GM13977 (cell line): ENCODE measurements at regions of chr19 and their contacts with region 1.

Region 1: GRCh38 chr19:1189419-1189818 is 15.4 kb upstream of the SBNO2 start:
- DNase-seq: no peak
- CTCF ChIP-seq: no peak

Region 2: DNA sequence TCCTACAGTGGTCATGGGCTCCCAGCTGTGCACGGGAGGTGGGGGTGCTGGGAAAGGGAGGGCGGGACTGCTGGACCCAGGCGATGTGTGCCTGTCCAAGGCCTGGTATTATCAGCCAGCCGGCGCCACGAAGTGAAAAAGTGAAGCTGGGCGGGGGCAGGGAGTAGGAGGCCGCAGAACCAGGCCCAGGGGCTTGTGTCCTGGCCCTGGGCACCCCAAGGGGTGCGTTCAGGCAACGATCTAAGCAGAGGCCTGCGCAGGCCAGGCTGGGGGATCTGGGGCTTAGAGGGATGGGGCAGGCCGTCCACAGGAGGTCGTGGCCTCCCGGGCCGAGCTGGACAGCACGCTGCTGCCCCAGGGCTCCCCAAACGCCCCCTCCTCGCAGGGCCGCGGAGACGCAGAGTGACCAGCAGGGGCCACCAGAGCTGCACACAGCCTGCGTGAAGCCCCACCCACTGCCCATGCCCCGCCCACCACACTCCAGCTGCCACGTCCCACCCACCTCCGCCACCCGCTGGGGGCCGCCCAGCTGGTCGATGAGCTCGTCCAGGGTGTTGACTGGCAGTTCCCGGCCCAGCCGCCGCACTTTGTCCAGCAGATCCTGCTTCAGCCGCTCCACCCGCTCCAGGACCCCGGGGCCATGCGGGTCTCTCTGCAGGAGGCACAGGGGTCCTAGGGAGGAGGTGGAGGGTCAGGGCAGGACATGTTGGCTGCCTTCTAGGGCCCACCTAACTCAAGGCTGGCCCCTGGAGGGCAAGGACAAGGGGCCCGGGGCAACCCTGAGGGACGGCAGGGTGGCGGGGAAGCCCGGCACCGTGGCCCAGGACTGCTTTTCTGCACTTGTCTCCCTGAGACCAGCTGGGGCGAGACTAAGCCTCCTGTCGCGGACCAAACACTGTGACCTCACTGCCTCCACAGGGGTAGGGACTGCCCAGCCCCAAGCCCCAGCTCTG is 76.1 kb before region 1 on chr19:
- in situ Hi-C with region 1: loop called (anchors 10 kb)
- DNase-seq: peak; percentile 99
- CTCF ChIP-seq: peak; percentile 88